ENCODE measurements at regions of chr12 and their contacts with region 1.

Region 1: GRCh38 chr12:48903982-48904411 is 21.3 kb downstream of the FKBP11 start:
- DNase-seq: no peak
- ATAC-seq: no peak
- H3K4me3 ChIP-seq: no peak overlapping the region
- H3K27ac ChIP-seq: no peak overlapping the region
- H3K4me1 ChIP-seq: no peaks in the 10 kb centered on the region
- H3K27me3 ChIP-seq: no peaks in the 10 kb centered on the region
- CTCF ChIP-seq: no peak

Region 2: GRCh38 chr12:48712209-48712608 is 191.8 kb before region 1 on chr12:
- CTCF ChIA-PET with region 1: interaction called, 11 read pairs
- POLR2A ChIA-PET with region 1: no interaction called
- intact Hi-C with region 1: no loop called
- DNase-seq: no peak
- ATAC-seq: no peak
- H3K4me3 ChIP-seq: no peak overlapping the region
- H3K27ac ChIP-seq: no peak overlapping the region
- H3K4me1 ChIP-seq: peaks cover 18% of the 10 kb centered on the region
- H3K27me3 ChIP-seq: no peaks in the 10 kb centered on the region
- CTCF ChIP-seq: no peak

Region 3: DNA sequence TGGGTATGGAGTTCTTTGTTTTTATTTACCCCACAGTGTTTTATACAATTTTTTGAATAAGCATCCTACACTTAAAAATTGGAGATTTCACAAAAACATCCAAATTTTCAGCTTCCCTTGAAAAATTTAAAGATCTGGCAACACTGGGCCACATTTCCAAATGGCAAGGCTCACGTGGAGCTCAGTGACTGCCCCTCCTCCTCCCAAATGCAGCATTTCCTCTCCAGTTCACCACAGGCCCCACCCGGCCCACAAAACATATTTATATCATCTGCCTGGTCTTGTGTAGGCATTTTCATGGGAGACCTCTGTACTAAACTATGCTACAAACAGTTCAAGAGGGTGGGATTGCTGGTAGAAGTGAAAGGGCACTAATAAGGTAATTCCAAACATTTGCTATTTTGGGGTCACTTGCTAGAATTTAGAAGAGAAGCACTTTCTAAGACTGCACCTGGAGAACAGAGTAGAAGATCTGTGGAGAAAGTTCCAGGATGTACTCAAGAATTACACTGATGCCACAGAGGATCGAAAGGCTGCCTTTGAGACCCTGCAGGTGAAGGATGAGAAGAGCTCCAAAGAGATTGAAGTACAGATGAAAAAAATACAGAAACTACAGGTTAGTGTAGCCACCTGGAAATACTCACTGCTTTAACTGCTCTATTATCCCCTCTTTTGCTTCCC is 14.0 kb after region 1 on chr12:
- CTCF ChIA-PET with region 1: no interaction called
- POLR2A ChIA-PET with region 1: interaction called, 25 read pairs
- intact Hi-C with region 1: no loop called
- DNase-seq: no peak
- ATAC-seq: peak; percentile 29; the same call in 1 of the 2 replicates
- H3K4me3 ChIP-seq: no peak overlapping the region
- H3K27ac ChIP-seq: no peak overlapping the region
- H3K4me1 ChIP-seq: no peaks in the 10 kb centered on the region
- H3K27me3 ChIP-seq: no peaks in the 10 kb centered on the region
- CTCF ChIP-seq: no peak